ENCODE measurements at regions of chr12 and their contacts with region 1.

Region 1: DNA sequence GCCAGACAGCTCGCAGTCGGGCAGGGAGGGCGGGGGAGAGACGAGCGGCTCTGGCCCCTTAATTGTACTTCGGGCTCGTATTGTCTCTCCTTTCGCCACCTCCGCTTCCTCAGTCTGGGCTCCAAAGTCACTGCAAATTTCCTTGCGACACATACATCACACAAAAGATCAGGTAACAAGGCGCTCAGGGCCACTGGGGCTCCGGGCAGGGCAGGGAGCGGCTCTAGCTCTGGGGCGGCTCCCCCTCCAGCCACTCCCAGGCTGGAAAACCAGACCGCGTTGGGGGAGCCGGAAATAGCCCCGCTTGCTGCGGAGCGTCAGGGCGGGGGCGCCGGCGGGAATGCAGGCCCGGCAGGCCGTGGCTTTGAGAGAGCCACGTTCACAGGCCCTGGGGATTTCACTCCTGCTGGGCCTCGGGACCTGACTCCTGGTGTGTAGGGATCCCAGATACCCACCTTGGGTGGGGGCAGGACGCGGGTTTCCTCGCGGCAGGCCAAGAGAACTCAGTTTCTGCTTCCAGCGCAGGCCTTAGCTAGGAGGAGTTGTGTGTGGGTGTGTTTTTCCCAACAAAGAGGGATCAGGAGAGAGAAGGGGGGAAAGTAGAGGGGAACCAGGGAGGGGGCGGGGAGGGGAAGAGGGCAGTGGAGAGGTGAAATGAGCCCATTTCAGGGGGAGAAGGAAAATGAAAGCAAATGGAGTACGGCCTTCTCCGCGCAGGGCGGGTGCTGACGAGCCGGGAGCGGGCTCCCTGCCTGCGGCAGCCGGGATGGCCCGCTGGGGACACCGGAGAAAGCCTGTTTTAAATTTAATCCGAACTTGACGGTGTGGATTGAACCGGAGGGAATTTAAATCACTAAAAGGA is 4.4 kb upstream of the HOXC9 start:
- DNase-seq: peak; percentile 57 to 94
- ATAC-seq: peak in 3 of 4 donors; percentile 56 to 73 (median 70)
- H3K4me3 ChIP-seq: peak overlapping the region; percentile 78
- H3K27ac ChIP-seq: peak overlapping the region; percentile 95
- H3K4me1 ChIP-seq: peaks cover 24% of the 10 kb centered on the region
- H3K27me3 ChIP-seq: peaks cover 0 to 3% (median 0%) of the 10 kb centered on the region in 3 donors
- CTCF ChIP-seq: no peak

Region 2: GRCh38 chr12:53974084-53975063 is 21.2 kb before region 1 on chr12 and contains the start of gene HOTAIR:
- intact Hi-C with region 1: no loop called
- DNase-seq: peak in 1 of 2 donors; percentile 83
- ATAC-seq: peak; percentile 32 to 65 (median 52)
- H3K4me3 ChIP-seq: peak within 1 kb of the TSS; percentile 69
- H3K27ac ChIP-seq: peak within 1 kb of the TSS; percentile 71
- H3K4me1 ChIP-seq: peaks cover 5% of the 10 kb centered on the region
- H3K27me3 ChIP-seq: peaks cover 0 to 75% (median 31%) of the 10 kb centered on the region in 3 donors
- CTCF ChIP-seq: no peak
- total RNA-seq, gene HOTAIR: 0.53 TPM in 1 of 4 donors, not detected in the others

Region 3: GRCh38 chr12:54279866-54280467 is 284.4 kb after region 1 on chr12 and contains the start of gene CBX5:
- intact Hi-C with region 1: loop called in 1 of 2 experiments (anchors 5 kb)
- DNase-seq: peak; percentile 99 to 100
- ATAC-seq: peak; percentile 70 to 79 (median 75)
- H3K4me3 ChIP-seq: peak within 1 kb of the TSS; percentile 98
- H3K27ac ChIP-seq: peak within 1 kb of the TSS; percentile 96
- H3K4me1 ChIP-seq: peaks cover 45% of the 10 kb centered on the region
- H3K27me3 ChIP-seq: no peaks in the 10 kb centered on the region
- CTCF ChIP-seq: no peak
- total RNA-seq, gene CBX5: 12.1 to 19.3 (median 16.4) TPM

Measured in psoas muscle (tissue), 8 donors.